HepG2 (cell line): ENCODE measurements at regions of chr6 and their contacts with region 1.

Region 1: DNA sequence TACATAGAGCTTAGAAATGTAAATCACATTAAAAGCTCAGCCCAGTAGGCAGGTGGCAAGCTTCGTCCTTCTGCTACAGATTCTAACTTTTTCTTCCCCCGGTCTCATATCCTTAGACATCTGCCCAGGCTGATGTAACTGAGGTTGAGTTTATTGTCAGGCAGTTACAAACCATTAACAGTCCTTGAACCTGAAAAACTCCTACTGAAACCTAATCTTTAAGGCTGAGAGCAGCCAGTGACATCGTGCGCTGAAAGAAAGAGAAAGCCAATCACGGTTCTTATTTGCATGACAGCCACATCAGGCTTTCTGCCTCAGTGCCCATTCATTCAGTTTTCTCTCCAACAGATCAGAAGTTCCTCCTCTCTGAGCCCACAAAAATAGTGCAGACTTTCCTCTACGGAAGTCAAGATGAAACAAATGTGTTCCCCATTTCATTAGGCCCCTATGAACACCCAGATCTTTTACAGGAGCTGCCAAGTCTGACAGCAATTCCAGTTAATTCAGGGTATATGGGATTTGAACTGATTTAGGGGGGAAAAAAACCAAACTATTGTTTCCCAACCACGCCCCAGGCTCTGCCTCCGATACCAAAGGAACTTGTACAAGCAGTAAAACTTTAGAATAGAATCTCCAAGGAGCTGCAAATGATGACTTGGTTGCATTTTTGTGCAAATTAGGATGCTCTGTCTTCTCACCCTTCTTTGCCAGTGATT is at the start of gene NHSL1:
- DNase-seq: peak; percentile 84
- ATAC-seq: peak; percentile 76
- H3K4me3 ChIP-seq: peak within 1 kb of the TSS; percentile 63 to 86 (median 75)
- H3K27ac ChIP-seq: peak within 1 kb of the TSS; percentile 70
- H3K4me1 ChIP-seq: peaks cover 89% of the 10 kb centered on the region
- H3K27me3 ChIP-seq: no peaks in the 10 kb centered on the region; a peak in 1 of 5 replicates
- CTCF ChIP-seq: 0 out of 2 replicates have a peak, but pooled peaks have one; percentile 4
- EP300 ChIP-seq: peak in 1 of 2 experiments; percentile 52; a peak in 2 of 4 replicates
- POLR2A ChIP-seq: peak; percentile 61 to 86; a peak in 3 of 4 replicates
- RAD21 ChIP-seq: no peak
- total RNA-seq, gene NHSL1: 53.6 and 59.5 TPM in 2 replicates

Region 2: GRCh38 chr6:138465007-138465645 is 34.3 kb before region 1 on chr6:
- CTCF ChIA-PET with region 1: no interaction called
- POLR2A ChIA-PET with region 1: interaction called, 14 read pairs
- in situ Hi-C with region 1: no loop called
- intact Hi-C with region 1: no loop called
- DNase-seq: peak; percentile 61
- ATAC-seq: peak; percentile 18; the same call in 1 of the 3 replicates
- H3K4me3 ChIP-seq: no peak overlapping the region
- H3K27ac ChIP-seq: no peak overlapping the region
- H3K4me1 ChIP-seq: peaks cover 16% of the 10 kb centered on the region
- H3K27me3 ChIP-seq: no peaks in the 10 kb centered on the region
- CTCF ChIP-seq: no peak
- EP300 ChIP-seq: no peak
- POLR2A ChIP-seq: no peak
- RAD21 ChIP-seq: no peak

Region 3: DNA sequence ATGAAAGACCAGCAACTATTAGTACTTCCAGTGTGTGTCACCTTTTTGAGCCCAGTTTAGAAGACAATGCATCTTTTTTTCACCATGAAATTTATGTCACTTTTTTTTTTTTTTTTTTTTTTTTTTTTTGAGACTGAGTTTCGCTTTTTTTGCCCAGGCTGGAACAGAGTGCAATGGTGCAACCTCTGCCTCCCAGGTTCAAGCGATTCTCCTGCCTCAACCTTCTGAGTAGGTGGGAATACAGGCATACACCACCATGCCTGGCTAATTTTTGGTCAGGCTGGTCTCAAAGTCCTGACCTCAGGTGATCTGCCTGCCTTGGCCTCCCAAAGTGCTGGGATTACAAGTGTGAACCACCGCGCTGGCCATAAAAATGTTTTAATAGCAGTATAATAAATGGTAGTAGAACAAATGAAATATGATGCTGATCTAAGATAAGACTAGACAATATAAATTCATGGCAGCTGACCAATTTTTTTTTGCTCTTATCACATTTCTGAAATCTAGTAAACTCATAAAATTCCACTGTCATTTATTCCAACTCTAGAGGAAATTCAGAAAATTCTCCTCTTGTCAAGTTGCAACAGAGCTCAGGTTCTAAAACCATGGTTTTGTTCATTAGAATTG is 21.4 kb before region 1 on chr6:
- CTCF ChIA-PET with region 1: no interaction called
- POLR2A ChIA-PET with region 1: interaction called, 4 read pairs
- in situ Hi-C with region 1: no loop called
- intact Hi-C with region 1: loop called (anchors 2 kb)
- DNase-seq: no peak
- ATAC-seq: peak; percentile 30; the same call in 1 of the 3 replicates
- H3K4me3 ChIP-seq: no peak overlapping the region
- H3K27ac ChIP-seq: peak overlapping the region; percentile 14
- H3K4me1 ChIP-seq: peaks cover 50% of the 10 kb centered on the region
- H3K27me3 ChIP-seq: no peaks in the 10 kb centered on the region
- CTCF ChIP-seq: no peak
- EP300 ChIP-seq: no peak
- POLR2A ChIP-seq: no peak
- RAD21 ChIP-seq: no peak

Region 4: DNA sequence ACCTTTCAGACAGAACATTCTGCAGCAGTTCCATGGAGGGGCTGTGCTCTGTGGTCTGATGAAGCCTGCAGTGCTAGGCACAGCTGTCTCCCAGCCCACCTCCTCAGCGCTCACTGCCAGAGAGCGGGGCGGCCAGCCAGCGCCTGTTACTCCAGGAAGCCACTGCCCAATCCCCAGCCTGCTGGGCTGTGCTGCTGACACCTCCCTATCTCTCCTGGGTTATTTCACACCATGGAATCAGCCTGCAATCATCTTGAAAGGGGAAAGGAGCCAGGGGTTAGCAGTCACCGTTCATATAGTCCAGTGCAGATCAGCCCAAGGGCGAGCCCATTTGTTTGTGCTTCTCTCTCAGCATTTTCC is 46.1 kb after region 1 on chr6:
- CTCF ChIA-PET with region 1: no interaction called
- POLR2A ChIA-PET with region 1: interaction called, 8 read pairs
- in situ Hi-C with region 1: no loop called
- intact Hi-C with region 1: loop called (anchors 1 kb)
- DNase-seq: no peak
- ATAC-seq: peak; percentile 38
- H3K4me3 ChIP-seq: peak overlapping the region; percentile 3 to 45 (median 37); a peak in 3 of 6 replicates
- H3K27ac ChIP-seq: peak overlapping the region; percentile 90
- H3K4me1 ChIP-seq: peaks cover 100% of the 10 kb centered on the region
- H3K27me3 ChIP-seq: no peaks in the 10 kb centered on the region
- CTCF ChIP-seq: no peak
- EP300 ChIP-seq: no peak
- POLR2A ChIP-seq: no peak
- RAD21 ChIP-seq: no peak

Region 5: GRCh38 chr6:139540276-139540675 is 1040.8 kb after region 1 on chr6:
- CTCF ChIA-PET with region 1: no interaction called
- POLR2A ChIA-PET with region 1: no interaction called
- in situ Hi-C with region 1: no loop called
- intact Hi-C with region 1: no loop called
- DNase-seq: no peak
- ATAC-seq: peak; percentile 37; the same call in 2 of the 3 replicates
- H3K4me3 ChIP-seq: peak overlapping the region in 2 of 3 experiments; percentile 8; a peak in 1 of 6 replicates
- H3K27ac ChIP-seq: no peak overlapping the region
- H3K4me1 ChIP-seq: peaks cover 41% of the 10 kb centered on the region
- H3K27me3 ChIP-seq: no peaks in the 10 kb centered on the region
- CTCF ChIP-seq: no peak
- EP300 ChIP-seq: no peak
- POLR2A ChIP-seq: no peak
- RAD21 ChIP-seq: no peak